OCI-LY7 (cell line): ENCODE measurements at regions of chr3 and their contacts with region 1.

Region 1: DNA sequence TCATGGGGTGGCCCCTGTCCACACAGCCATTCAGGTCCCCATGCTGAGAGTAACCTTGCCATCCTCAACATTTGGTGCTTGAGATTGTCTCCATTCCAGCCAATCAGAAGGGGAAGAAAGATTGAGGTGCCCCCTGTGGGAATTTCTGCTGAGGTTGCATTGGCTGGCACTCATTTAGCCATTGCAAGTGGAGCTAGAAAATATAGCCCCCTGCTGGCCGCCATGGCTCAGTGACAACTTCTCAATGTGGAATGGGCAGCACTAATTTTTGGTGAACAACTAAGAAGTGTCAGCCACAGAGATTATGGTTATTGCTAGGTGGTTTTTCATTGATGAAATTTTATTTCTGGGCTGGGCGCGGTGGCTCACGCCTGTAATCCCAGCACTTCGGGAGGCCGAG is 22.0 kb downstream of the COL6A6 start:
- DNase-seq: peak; percentile 49
- H3K4me3 ChIP-seq: no peak overlapping the region
- H3K27ac ChIP-seq: no peak overlapping the region
- H3K4me1 ChIP-seq: peaks cover 8% of the 10 kb centered on the region
- CTCF ChIP-seq: peak; percentile 79

Region 2: GRCh38 chr3:130276203-130276803 is 262.7 kb before region 1 on chr3:
- CTCF ChIA-PET with region 1: no interaction called
- POLR2A ChIA-PET with region 1: no interaction called
- intact Hi-C with region 1: loop called (anchors 2 kb)
- DNase-seq: peak; percentile 58
- H3K4me3 ChIP-seq: no peak overlapping the region
- H3K27ac ChIP-seq: no peak overlapping the region
- H3K4me1 ChIP-seq: no peaks in the 10 kb centered on the region
- CTCF ChIP-seq: peak; percentile 95

Region 3: DNA sequence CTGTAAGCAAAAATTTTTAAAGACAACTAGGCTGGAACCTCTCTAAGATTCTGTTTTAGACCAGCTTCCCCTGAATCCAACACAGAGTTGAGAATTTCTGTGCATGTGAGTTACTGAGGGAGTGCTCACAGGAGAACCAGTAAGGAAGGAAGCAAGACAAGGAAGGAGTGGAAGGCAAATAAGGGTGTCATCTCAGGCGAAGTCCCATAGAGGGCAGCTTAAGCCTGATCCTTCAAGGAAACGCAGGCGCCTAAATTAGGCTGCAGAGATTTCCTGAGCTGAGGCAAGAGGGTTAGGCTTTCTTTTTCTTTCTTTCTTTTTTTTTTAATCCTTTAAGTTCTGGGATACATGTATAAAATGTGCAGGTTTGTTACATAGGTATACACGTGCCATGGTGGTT is 58.3 kb before region 1 on chr3:
- CTCF ChIA-PET with region 1: no interaction called
- POLR2A ChIA-PET with region 1: no interaction called
- intact Hi-C with region 1: no loop called
- DNase-seq: no peak
- H3K4me3 ChIP-seq: no peak overlapping the region
- H3K27ac ChIP-seq: no peak overlapping the region
- H3K4me1 ChIP-seq: no peaks in the 10 kb centered on the region
- CTCF ChIP-seq: 0 out of 2 replicates have a peak, but pooled peaks have one; percentile 27

Region 4: GRCh38 chr3:130519754-130520153 is 19.3 kb before region 1 on chr3:
- CTCF ChIA-PET with region 1: no interaction called
- POLR2A ChIA-PET with region 1: interaction called, 13 read pairs
- intact Hi-C with region 1: no loop called
- DNase-seq: no peak
- H3K4me3 ChIP-seq: no peak overlapping the region
- H3K27ac ChIP-seq: no peak overlapping the region
- H3K4me1 ChIP-seq: no peaks in the 10 kb centered on the region
- CTCF ChIP-seq: no peak

Region 5: GRCh38 chr3:130601442-130601971 is 62.5 kb after region 1 on chr3:
- CTCF ChIA-PET with region 1: no interaction called
- POLR2A ChIA-PET with region 1: no interaction called
- intact Hi-C with region 1: no loop called
- DNase-seq: no peak
- H3K4me3 ChIP-seq: no peak overlapping the region
- H3K27ac ChIP-seq: no peak overlapping the region
- H3K4me1 ChIP-seq: no peaks in the 10 kb centered on the region
- CTCF ChIP-seq: no peak